Breast epithelium (tissue), 4 donors: ENCODE measurements at regions of chr5 and their contacts with region 1.

Region 1: DNA sequence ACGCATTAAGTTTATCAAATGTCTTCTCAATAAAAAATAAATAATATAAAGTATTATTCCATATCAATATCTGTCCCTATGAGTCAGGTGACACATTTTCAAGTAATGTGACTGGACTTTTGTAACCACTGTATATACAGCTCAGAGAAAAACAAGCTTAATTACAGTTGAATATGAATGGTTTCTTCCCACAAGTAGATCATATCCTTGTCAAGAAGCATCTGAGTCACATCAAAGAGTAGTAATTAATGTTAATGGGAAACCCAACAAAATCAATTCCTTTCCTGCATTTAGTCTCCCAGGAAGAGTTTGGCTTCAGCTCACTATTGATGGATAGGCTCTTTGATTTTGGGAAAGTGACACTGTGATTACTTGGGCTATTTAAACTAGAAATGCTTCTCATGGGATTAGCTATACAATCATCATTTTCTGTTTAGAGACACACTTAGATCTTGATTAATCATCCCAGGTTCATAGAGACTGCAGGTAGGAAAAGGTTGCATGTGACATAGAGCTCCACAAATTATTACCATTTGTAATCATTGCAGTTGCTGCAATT is 292.9 kb downstream of the GABRG2 start:
- DNase-seq: no peak
- H3K4me3 ChIP-seq: no peak overlapping the region
- H3K27ac ChIP-seq: no peak overlapping the region
- H3K4me1 ChIP-seq: no peaks in the 10 kb centered on the region
- H3K27me3 ChIP-seq: no peaks in the 10 kb centered on the region
- CTCF ChIP-seq: no peak
- POLR2A ChIP-seq: no peak

Region 2: DNA sequence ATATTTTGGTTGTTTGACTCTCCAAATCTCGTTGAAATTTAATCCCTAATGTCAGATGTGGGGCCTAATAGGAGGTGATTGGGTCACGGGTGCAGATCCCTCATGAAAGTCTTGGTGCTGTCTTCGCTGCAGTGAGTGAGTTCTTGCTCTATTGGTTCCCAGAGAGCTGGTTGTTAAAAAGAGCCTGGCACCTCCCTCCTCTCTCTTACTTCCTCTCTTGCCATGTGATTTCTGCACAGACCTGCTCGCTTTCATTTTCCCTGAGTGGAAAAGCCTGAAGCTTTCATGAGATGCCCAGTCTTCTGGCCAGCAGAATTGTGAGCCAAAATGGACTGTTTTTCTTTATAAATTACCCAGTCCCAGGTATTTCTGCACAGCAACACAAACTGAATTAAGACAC is 1366.6 kb after region 1 on chr5:
- intact Hi-C with region 1: loop called (anchors 10 kb)
- DNase-seq: no peak
- H3K4me3 ChIP-seq: no peak overlapping the region
- H3K27ac ChIP-seq: no peak overlapping the region
- H3K4me1 ChIP-seq: no peaks in the 10 kb centered on the region
- H3K27me3 ChIP-seq: no peaks in the 10 kb centered on the region
- CTCF ChIP-seq: no peak
- POLR2A ChIP-seq: no peak